Naive thymus-derived CD8-positive, alpha-beta T cell (primary cell): ENCODE measurements at regions of chr22 and their contacts with region 1.

Region 1: DNA sequence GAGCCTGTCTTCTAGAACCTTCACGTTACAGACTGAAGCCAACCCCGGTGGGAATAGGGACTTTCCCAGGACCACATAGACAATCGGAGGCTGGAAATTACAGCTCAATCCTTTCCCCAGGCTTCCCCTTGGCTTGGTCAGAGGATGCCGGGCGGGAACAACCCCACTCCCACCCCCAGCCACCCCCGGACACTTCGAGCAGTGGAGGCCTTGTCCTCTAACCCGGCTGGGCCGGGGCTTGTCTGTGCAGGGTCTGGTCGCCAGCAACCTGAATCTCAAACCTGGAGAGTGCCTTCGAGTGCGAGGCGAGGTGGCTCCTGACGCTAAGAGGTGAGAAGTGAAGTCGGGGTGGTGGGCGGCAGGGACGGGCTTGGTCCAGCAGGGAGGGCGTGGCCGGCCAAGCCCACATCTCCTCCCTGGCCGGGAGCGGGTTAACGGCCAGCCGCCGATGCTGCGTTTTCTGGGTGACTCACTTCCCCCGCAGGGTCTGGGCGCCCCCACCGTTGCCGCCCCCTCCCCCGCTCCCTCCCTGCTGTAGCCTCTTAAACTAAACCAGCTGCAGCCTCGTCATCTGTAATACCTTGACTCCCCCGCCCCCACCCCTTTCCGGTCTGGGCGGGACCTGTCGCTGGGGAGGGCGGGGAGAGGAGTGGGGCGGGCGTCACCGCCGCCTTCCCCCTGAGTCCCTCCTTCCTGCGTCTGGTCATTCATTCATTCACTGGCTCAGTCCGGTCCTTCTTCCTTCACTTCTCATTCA is 1.5 kb downstream of the LGALS1 start:
- DNase-seq: peak; percentile 88 to 97 (median 92)
- ATAC-seq: peak; percentile 79 to 87
- H3K4me3 Mint-ChIP-seq: peak overlapping the region; percentile 89 to 99 (median 93)
- H3K27ac Mint-ChIP-seq: peak overlapping the region; percentile 91 to 100 (median 100)
- H3K4me1 Mint-ChIP-seq: peaks cover 20 to 64% (median 60%) of the 10 kb centered on the region in 4 donors
- H3K27me3 Mint-ChIP-seq: no peaks in the 10 kb centered on the region

Region 2: GRCh38 chr22:37601540-37602442 is 75.1 kb before region 1 on chr22:
- POLR2A ChIA-PET with region 1: interaction called, 2,283 read pairs
- DNase-seq: peak in 1 of 10 donors; percentile 40
- ATAC-seq: no peak
- H3K4me3 Mint-ChIP-seq: no peak overlapping the region
- H3K27ac Mint-ChIP-seq: peak overlapping the region in 2 of 10 donors; percentile 15 to 58
- H3K4me1 Mint-ChIP-seq: peaks cover 22 to 43% (median 32%) of the 10 kb centered on the region in 4 donors
- H3K27me3 Mint-ChIP-seq: peaks cover 0 to 1% (median 0%) of the 10 kb centered on the region in 5 donors